Heart right ventricle (tissue), 16 donors: ENCODE measurements at regions of chrX and their contacts with region 1.

Region 1: DNA sequence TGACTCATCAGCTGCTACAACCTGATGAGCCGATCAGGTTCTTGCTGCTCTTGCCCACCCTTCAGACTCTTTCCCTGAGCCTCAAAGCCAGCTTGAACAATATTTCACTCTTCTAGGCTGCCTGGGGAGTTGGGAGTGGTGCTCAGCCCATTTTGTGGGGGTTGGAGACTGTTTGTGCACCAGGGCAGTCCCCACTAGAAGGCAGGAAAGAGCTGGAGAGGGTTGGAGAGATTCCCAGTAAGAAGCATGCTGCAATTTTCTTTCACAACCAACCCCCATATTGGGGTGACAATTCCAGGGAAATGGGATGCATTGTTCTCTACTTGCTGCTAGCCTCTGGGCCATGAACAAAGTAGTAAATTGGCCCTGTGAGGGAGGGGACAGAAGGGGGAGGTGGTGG is 44.1 kb downstream of the SLC16A2 start:
- DNase-seq: no peak
- ATAC-seq: peak in 1 of 8 donors; percentile 31
- H3K4me3 ChIP-seq: no peak overlapping the region
- H3K27ac ChIP-seq: no peak overlapping the region
- H3K4me1 ChIP-seq: peaks cover 0 to 6% (median 0%) of the 10 kb centered on the region in 9 donors
- H3K27me3 ChIP-seq: peaks cover 0 to 44% (median 0%) of the 10 kb centered on the region in 7 donors
- CTCF ChIP-seq: no peak

Region 2: GRCh38 chrX:74521961-74522751 is 56.7 kb after region 1 on chrX:
- intact Hi-C with region 1: loop called in 1 of 10 experiments (anchors 10 kb)
- DNase-seq: peak in 1 of 2 donors; percentile 7
- ATAC-seq: peak; percentile 34 to 79 (median 66)
- H3K4me3 ChIP-seq: no peak overlapping the region
- H3K27ac ChIP-seq: peak overlapping the region in 4 of 10 donors; percentile 3 to 31 (median 18)
- H3K4me1 ChIP-seq: peaks cover 0 to 11% (median 4%) of the 10 kb centered on the region in 9 donors
- H3K27me3 ChIP-seq: no peaks in the 10 kb centered on the region
- CTCF ChIP-seq: no peak

Region 3: GRCh38 chrX:75609406-75609805 is 1144.0 kb after region 1 on chrX:
- intact Hi-C with region 1: no loop called
- DNase-seq: no peak
- ATAC-seq: no peak
- H3K4me3 ChIP-seq: no peak overlapping the region
- H3K27ac ChIP-seq: no peak overlapping the region
- H3K4me1 ChIP-seq: peaks cover 0 to 2% (median 0%) of the 10 kb centered on the region in 9 donors
- H3K27me3 ChIP-seq: peaks cover 0 to 12% (median 0%) of the 10 kb centered on the region in 7 donors
- CTCF ChIP-seq: no peak